ENCODE measurements at regions of chr5 and their contacts with region 1.

Region 1: DNA sequence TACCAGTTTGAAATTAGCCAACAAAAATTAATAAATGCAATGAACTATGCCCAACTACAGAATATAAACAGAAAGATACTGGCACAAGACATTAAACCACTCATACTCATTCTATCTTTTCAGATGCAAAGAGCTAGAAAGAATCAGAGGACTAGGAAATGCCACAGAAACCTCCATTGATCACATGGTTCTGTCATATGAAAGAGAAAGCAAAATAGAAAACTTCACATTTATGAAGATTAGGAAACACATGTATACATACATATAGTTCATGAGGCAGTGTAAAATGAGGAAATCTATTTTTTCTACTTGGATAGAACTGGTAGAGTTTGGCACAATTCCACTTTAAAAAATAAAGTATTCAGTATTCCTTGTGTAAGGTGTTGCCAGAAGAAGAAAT is 275.1 kb upstream of the PTGER4 start:
- DNase-seq: peak; percentile 56
- ATAC-seq: peak; percentile 57
- H3K4me3 Mint-ChIP-seq: peak overlapping the region; percentile 57
- H3K27ac Mint-ChIP-seq: peak overlapping the region; percentile 88
- H3K4me1 Mint-ChIP-seq: peaks cover 77% of the 10 kb centered on the region
- H3K27me3 Mint-ChIP-seq: no peaks in the 10 kb centered on the region

Region 2: GRCh38 chr5:40386289-40386688 is 18.3 kb before region 1 on chr5:
- CTCF ChIA-PET with region 1: interaction called, 29 read pairs
- POLR2A ChIA-PET with region 1: interaction called, 18 read pairs
- DNase-seq: peak; percentile 65
- ATAC-seq: peak; percentile 68
- H3K4me3 Mint-ChIP-seq: peak overlapping the region; percentile 15
- H3K27ac Mint-ChIP-seq: peak overlapping the region; percentile 60
- H3K4me1 Mint-ChIP-seq: peaks cover 90% of the 10 kb centered on the region
- H3K27me3 Mint-ChIP-seq: no peaks in the 10 kb centered on the region

Region 3: GRCh38 chr5:40391642-40392041 is 13.0 kb before region 1 on chr5:
- CTCF ChIA-PET with region 1: interaction called, 29 read pairs
- POLR2A ChIA-PET with region 1: interaction called, 3 read pairs
- DNase-seq: no peak
- ATAC-seq: peak; percentile 63
- H3K4me3 Mint-ChIP-seq: no peak overlapping the region
- H3K27ac Mint-ChIP-seq: no peak overlapping the region
- H3K4me1 Mint-ChIP-seq: peaks cover 48% of the 10 kb centered on the region
- H3K27me3 Mint-ChIP-seq: no peaks in the 10 kb centered on the region

Region 4: GRCh38 chr5:40429258-40430101 is 24.9 kb after region 1 on chr5:
- CTCF ChIA-PET with region 1: interaction called, 27 read pairs
- POLR2A ChIA-PET with region 1: interaction called, 6 read pairs
- DNase-seq: no peak
- ATAC-seq: peak; percentile 78
- H3K4me3 Mint-ChIP-seq: peak overlapping the region; percentile 23
- H3K27ac Mint-ChIP-seq: peak overlapping the region; percentile 90
- H3K4me1 Mint-ChIP-seq: peaks cover 61% of the 10 kb centered on the region
- H3K27me3 Mint-ChIP-seq: no peaks in the 10 kb centered on the region

Region 5: GRCh38 chr5:40453689-40454088 is 49.1 kb after region 1 on chr5:
- CTCF ChIA-PET with region 1: no interaction called
- POLR2A ChIA-PET with region 1: no interaction called
- DNase-seq: no peak
- ATAC-seq: no peak
- H3K4me3 Mint-ChIP-seq: no peak overlapping the region
- H3K27ac Mint-ChIP-seq: no peak overlapping the region
- H3K4me1 Mint-ChIP-seq: no peaks in the 10 kb centered on the region
- H3K27me3 Mint-ChIP-seq: no peaks in the 10 kb centered on the region

Region 6: GRCh38 chr5:40486437-40487275 is 82.0 kb after region 1 on chr5:
- CTCF ChIA-PET with region 1: interaction called, 6 read pairs
- POLR2A ChIA-PET with region 1: interaction called, 10 read pairs
- DNase-seq: peak; percentile 83
- ATAC-seq: peak; percentile 88
- H3K4me3 Mint-ChIP-seq: peak overlapping the region; percentile 4
- H3K27ac Mint-ChIP-seq: peak overlapping the region; percentile 76
- H3K4me1 Mint-ChIP-seq: peaks cover 76% of the 10 kb centered on the region
- H3K27me3 Mint-ChIP-seq: no peaks in the 10 kb centered on the region

Measured in activated CD8-positive, alpha-beta T cell treated with anti-CD3 and anti-CD28 coated beads, Interleukin-2, amount 10 ng/mL, durations not matched to agents 7 days and 5 days (primary cell).